ENCODE measurements at regions of chr17 and their contacts with region 1.

Region 1: GRCh38 chr17:35537601-35538141 is at the start of gene SLFN12L:
- DNase-seq: no peak
- H3K4me3 ChIP-seq: no peak within 1 kb of the TSS
- H3K27ac ChIP-seq: peak within 1 kb of the TSS in 2 of 4 donors; percentile 16 to 39
- H3K4me1 ChIP-seq: peaks cover 0 to 22% (median 0%) of the 10 kb centered on the region in 4 donors
- H3K27me3 ChIP-seq: no peaks in the 10 kb centered on the region
- CTCF ChIP-seq: no peak
- EP300 ChIP-seq: no peak
- POLR2A ChIP-seq: no peak
- total RNA-seq, gene SLFN12L: 0.27 to 1.2 (median 0.63) TPM

Region 2: GRCh38 chr17:35170968-35171771 is 366.5 kb before region 1 on chr17:
- intact Hi-C with region 1: loop called (anchors 2 kb)
- DNase-seq: no peak
- H3K4me3 ChIP-seq: no peak overlapping the region
- H3K27ac ChIP-seq: no peak overlapping the region
- H3K4me1 ChIP-seq: no peaks in the 10 kb centered on the region
- H3K27me3 ChIP-seq: no peaks in the 10 kb centered on the region
- CTCF ChIP-seq: peak in 3 of 4 experiments; percentile 7 to 26 (median 16)
- EP300 ChIP-seq: no peak
- POLR2A ChIP-seq: no peak

Region 3: DNA sequence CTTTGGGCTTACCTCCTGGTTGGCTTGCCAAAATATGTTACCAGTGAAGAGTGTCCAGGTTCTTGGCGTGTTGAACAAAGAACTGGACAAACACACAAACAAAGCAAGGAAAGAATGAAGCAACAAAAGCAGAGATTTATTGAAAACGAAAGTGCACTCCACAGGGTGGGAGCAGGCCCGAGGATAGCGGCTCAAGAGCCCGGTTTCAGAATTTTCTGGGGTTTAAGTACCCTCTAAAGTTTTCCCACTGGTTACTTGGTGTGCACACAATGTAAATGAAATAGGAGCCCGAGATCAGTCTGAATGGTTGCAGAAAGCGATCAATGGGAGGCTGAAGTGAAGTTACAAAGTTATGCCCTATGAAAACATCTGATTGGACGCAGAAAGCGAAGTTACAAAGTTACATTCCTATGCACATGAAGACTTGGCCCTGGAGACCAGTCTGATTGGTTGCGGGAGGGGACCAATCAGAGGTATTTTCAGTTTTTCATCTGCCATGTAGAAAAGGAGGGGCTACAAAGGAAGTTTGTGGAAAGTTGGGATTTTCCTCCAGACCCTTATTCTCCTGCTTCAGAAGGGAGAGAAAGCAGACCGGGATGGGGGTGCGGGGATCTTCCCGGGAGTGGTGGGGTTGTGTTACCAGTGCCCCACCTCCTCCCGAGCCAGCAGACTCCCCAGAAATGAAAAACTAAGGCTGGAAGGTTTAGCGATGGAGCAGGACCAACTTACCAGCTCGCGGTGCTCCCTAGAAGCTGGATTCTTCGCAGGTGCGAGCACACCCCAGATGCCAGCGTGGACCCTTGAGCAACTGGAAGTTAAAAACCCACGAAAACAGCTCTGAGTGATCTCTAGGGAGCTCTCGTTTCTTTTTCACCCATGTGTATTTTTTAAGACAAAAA is 105.2 kb before region 1 on chr17 and contains the start of gene SLFN12:
- intact Hi-C with region 1: loop called (anchors 5 kb)
- DNase-seq: peak; percentile 87
- H3K4me3 ChIP-seq: peak within 1 kb of the TSS; percentile 43 to 62 (median 54)
- H3K27ac ChIP-seq: peak within 1 kb of the TSS; percentile 80 to 87 (median 85)
- H3K4me1 ChIP-seq: peaks cover 0 to 26% (median 20%) of the 10 kb centered on the region in 4 donors
- H3K27me3 ChIP-seq: no peaks in the 10 kb centered on the region
- CTCF ChIP-seq: no peak
- EP300 ChIP-seq: no peak
- POLR2A ChIP-seq: no peak
- total RNA-seq, gene SLFN12: 6.4 to 19.9 (median 10.2) TPM

Region 4: GRCh38 chr17:35476283-35476820 is 61.3 kb before region 1 on chr17:
- intact Hi-C with region 1: no loop called
- DNase-seq: no peak
- H3K4me3 ChIP-seq: no peak overlapping the region
- H3K27ac ChIP-seq: no peak overlapping the region
- H3K4me1 ChIP-seq: no peaks in the 10 kb centered on the region
- H3K27me3 ChIP-seq: peaks cover 0 to 20% (median 0%) of the 10 kb centered on the region in 3 donors
- CTCF ChIP-seq: no peak
- EP300 ChIP-seq: no peak
- POLR2A ChIP-seq: no peak

Region 5: GRCh38 chr17:35587074-35587971 is 49.7 kb after region 1 on chr17 and contains the start of gene AP2B1:
- intact Hi-C with region 1: no loop called
- DNase-seq: peak; percentile 97
- H3K4me3 ChIP-seq: peak within 1 kb of the TSS; percentile 77 to 92 (median 82)
- H3K27ac ChIP-seq: peak within 1 kb of the TSS; percentile 88 to 95 (median 90)
- H3K4me1 ChIP-seq: peaks cover 3 to 40% (median 29%) of the 10 kb centered on the region in 4 donors
- H3K27me3 ChIP-seq: no peaks in the 10 kb centered on the region
- CTCF ChIP-seq: no peak
- EP300 ChIP-seq: peak in 1 of 4 donors; percentile 56
- POLR2A ChIP-seq: peak; percentile 56 to 58
- total RNA-seq, gene AP2B1: 46.7 to 58.7 (median 53.2) TPM